Endothelial cell of umbilical vein (primary cell): ENCODE measurements at regions of chr3 and their contacts with region 1.

Region 1: DNA sequence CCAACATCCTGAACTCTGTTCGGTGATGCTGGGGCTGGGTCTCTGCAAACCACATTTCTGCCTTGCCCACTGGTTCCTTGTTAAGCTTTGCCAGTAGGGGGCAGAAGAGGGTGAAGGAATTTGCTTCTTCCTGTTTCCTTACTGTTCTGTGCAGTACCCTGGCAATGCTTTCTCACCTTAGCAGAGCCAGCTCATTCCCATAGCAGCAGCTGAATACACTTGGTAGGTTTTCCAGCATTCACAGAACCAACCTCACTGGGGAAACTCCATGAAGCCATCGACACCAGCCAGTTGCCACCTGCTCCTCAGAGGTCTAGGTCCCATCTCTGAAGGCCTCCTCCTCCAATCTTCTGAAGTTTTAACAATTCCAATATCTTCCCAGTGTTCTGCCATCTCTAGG is 308.4 kb downstream of the PDCD6IP start:
- DNase-seq: peak; percentile 79
- H3K4me3 ChIP-seq: no peak overlapping the region
- H3K27ac ChIP-seq: no peak overlapping the region
- H3K4me1 ChIP-seq: no peaks in the 10 kb centered on the region
- H3K27me3 ChIP-seq: peaks cover 6 to 9% of the 10 kb centered on the region in 2 experiments
- CTCF ChIP-seq: peak; percentile 78 to 86
- POLR2A ChIP-seq: no peak

Region 2: GRCh38 chr3:34189133-34189532 is 82.3 kb after region 1 on chr3:
- CTCF ChIA-PET with region 1: no interaction called
- POLR2A ChIA-PET with region 1: no interaction called
- dilution Hi-C with region 1: no loop called
- intact Hi-C with region 1: no loop called
- DNase-seq: no peak
- H3K4me3 ChIP-seq: no peak overlapping the region
- H3K27ac ChIP-seq: no peak overlapping the region
- H3K4me1 ChIP-seq: no peaks in the 10 kb centered on the region
- H3K27me3 ChIP-seq: no peaks in the 10 kb centered on the region
- CTCF ChIP-seq: no peak
- POLR2A ChIP-seq: no peak

Region 3: GRCh38 chr3:34277110-34277509 is 170.2 kb after region 1 on chr3:
- CTCF ChIA-PET with region 1: no interaction called
- POLR2A ChIA-PET with region 1: no interaction called
- dilution Hi-C with region 1: no loop called
- intact Hi-C with region 1: loop called (anchors 5 kb)
- DNase-seq: no peak
- H3K4me3 ChIP-seq: no peak overlapping the region
- H3K27ac ChIP-seq: no peak overlapping the region
- H3K4me1 ChIP-seq: no peaks in the 10 kb centered on the region
- H3K27me3 ChIP-seq: no peaks in the 10 kb centered on the region
- CTCF ChIP-seq: no peak
- POLR2A ChIP-seq: no peak

Region 4: GRCh38 chr3:34364335-34364734 is 257.5 kb after region 1 on chr3:
- CTCF ChIA-PET with region 1: no interaction called
- POLR2A ChIA-PET with region 1: no interaction called
- dilution Hi-C with region 1: no loop called
- intact Hi-C with region 1: no loop called
- DNase-seq: peak; percentile 3
- H3K4me3 ChIP-seq: no peak overlapping the region
- H3K27ac ChIP-seq: no peak overlapping the region
- H3K4me1 ChIP-seq: no peaks in the 10 kb centered on the region
- H3K27me3 ChIP-seq: no peaks in the 10 kb centered on the region
- CTCF ChIP-seq: no peak
- POLR2A ChIP-seq: no peak

Region 5: DNA sequence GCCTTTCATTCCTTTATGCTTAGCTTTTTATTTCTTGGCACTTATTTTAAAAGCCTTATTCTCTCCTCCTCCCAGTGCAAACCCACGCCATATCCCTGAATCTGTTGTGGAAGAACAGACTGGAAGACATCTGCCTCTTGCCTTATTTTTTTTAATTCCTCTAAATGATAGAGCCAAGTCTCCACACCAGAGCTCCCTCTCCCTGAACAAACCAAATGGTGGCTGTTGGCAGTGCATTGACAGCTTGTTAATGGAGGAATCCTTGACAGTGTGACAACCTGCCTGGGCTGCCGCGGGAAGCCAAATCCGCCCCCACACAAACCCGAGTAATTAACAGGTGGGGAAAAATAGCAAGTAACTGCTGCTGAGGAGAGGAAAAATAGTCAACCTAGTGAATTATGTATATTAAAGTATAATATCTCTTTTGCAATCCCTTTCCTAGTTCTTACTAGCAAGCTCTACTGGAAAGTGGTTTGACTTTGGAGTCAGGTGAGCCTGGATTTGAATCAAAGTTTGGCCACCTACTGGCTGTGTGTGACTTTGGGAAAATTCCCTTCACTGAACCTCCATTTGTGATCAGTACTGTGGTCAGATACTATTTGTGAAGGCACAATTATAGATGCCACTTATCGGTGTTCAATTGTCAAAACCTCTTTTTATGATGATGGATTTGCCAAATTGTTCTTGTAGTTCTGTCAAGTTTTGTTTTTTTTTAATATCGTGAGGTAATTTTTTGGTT is 281.1 kb after region 1 on chr3:
- CTCF ChIA-PET with region 1: interaction called, 5 read pairs
- POLR2A ChIA-PET with region 1: no interaction called
- dilution Hi-C with region 1: no loop called
- intact Hi-C with region 1: loop called (anchors 10 kb)
- DNase-seq: no peak
- H3K4me3 ChIP-seq: no peak overlapping the region
- H3K27ac ChIP-seq: no peak overlapping the region
- H3K4me1 ChIP-seq: no peaks in the 10 kb centered on the region
- H3K27me3 ChIP-seq: no peaks in the 10 kb centered on the region
- CTCF ChIP-seq: no peak
- POLR2A ChIP-seq: no peak

Region 6: GRCh38 chr3:34408088-34408487 is 301.2 kb after region 1 on chr3:
- CTCF ChIA-PET with region 1: no interaction called
- POLR2A ChIA-PET with region 1: no interaction called
- dilution Hi-C with region 1: no loop called
- intact Hi-C with region 1: no loop called
- DNase-seq: no peak
- H3K4me3 ChIP-seq: no peak overlapping the region
- H3K27ac ChIP-seq: no peak overlapping the region
- H3K4me1 ChIP-seq: no peaks in the 10 kb centered on the region
- H3K27me3 ChIP-seq: no peaks in the 10 kb centered on the region
- CTCF ChIP-seq: no peak
- POLR2A ChIP-seq: no peak

Region 7: GRCh38 chr3:35946121-35946853 is 1839.4 kb after region 1 on chr3:
- CTCF ChIA-PET with region 1: interaction called, 16 read pairs
- POLR2A ChIA-PET with region 1: no interaction called
- dilution Hi-C with region 1: no loop called
- intact Hi-C with region 1: no loop called
- DNase-seq: peak; percentile 59
- H3K4me3 ChIP-seq: no peak overlapping the region
- H3K27ac ChIP-seq: no peak overlapping the region
- H3K4me1 ChIP-seq: peaks cover 10% of the 10 kb centered on the region
- H3K27me3 ChIP-seq: peaks cover 5 to 11% of the 10 kb centered on the region in 2 experiments
- CTCF ChIP-seq: peak; percentile 20 to 50
- POLR2A ChIP-seq: no peak